CD8-positive, alpha-beta memory T cell (primary cell): ENCODE measurements at regions of chr3 and their contacts with region 1.

Region 1: GRCh38 chr3:120558771-120559241 is 37.3 kb upstream of the NDUFB4 start:
- DNase-seq: peak; percentile 83 to 92 (median 85)
- H3K4me3 ChIP-seq: peak overlapping the region; percentile 71
- H3K4me3 Mint-ChIP-seq: peak overlapping the region; percentile 64 to 87 (median 80)
- H3K27ac ChIP-seq: peak overlapping the region; percentile 63
- H3K27ac Mint-ChIP-seq: peak overlapping the region; percentile 57 to 93 (median 88)
- H3K4me1 ChIP-seq: peaks cover 8% of the 10 kb centered on the region
- H3K4me1 Mint-ChIP-seq: peaks cover 9 to 19% (median 18%) of the 10 kb centered on the region in 3 donors
- H3K27me3 ChIP-seq: peaks cover 10% of the 10 kb centered on the region
- H3K27me3 Mint-ChIP-seq: peaks cover 9 to 14% of the 10 kb centered on the region in 2 donors

Region 2: DNA sequence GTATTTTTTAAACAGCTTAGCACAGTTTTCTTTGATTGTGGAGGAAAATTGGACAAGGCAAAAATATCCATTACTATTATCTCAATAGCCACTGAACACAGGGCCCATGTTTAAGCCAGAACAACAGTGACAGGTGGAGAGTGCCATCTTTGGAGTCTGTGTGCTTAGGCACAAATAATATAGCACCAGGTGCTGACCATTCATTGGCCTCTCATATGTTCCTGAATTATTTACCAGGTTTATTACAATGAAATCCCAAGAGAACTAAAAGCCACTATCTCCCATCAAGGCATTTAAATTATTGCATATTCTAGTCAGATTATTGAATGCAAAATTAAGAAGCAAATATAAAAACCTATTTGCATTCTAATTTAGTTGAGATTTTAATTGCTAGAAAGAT is 313.4 kb before region 1 on chr3:
- CTCF ChIA-PET with region 1: interaction called, 25 read pairs
- POLR2A ChIA-PET with region 1: no interaction called
- DNase-seq: no peak
- H3K4me3 ChIP-seq: no peak overlapping the region
- H3K4me3 Mint-ChIP-seq: no peak overlapping the region
- H3K27ac ChIP-seq: no peak overlapping the region
- H3K27ac Mint-ChIP-seq: no peak overlapping the region
- H3K4me1 ChIP-seq: no peaks in the 10 kb centered on the region
- H3K4me1 Mint-ChIP-seq: no peaks in the 10 kb centered on the region
- H3K27me3 ChIP-seq: no peaks in the 10 kb centered on the region
- H3K27me3 Mint-ChIP-seq: peaks cover 23 to 39% of the 10 kb centered on the region in 2 donors

Region 3: DNA sequence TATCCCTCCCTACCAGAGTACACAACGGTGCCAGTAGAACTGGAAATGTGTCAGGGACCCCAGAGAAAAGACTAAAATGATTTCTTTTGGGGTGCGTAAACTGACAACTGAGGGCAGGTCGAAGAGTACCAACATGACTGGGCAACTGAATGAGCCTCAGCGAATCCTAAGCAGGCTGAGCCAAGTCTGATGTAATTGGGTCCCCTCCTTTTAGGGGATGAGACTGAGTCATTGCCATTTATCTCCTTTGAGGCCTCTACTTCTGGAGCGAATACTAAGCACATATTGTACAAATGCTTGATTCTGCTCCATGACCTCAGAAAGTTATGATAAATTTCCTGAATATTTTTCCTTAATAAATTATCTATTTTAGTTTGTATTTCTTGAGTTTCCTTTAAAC is 256.4 kb before region 1 on chr3:
- CTCF ChIA-PET with region 1: no interaction called
- POLR2A ChIA-PET with region 1: no interaction called
- DNase-seq: no peak
- H3K4me3 ChIP-seq: no peak overlapping the region
- H3K4me3 Mint-ChIP-seq: no peak overlapping the region
- H3K27ac ChIP-seq: no peak overlapping the region
- H3K27ac Mint-ChIP-seq: no peak overlapping the region
- H3K4me1 ChIP-seq: no peaks in the 10 kb centered on the region
- H3K4me1 Mint-ChIP-seq: no peaks in the 10 kb centered on the region
- H3K27me3 ChIP-seq: no peaks in the 10 kb centered on the region
- H3K27me3 Mint-ChIP-seq: peaks cover 0 to 5% of the 10 kb centered on the region in 2 donors

Region 4: GRCh38 chr3:120417272-120417911 is 141.4 kb before region 1 on chr3:
- CTCF ChIA-PET with region 1: interaction called, 23 read pairs
- POLR2A ChIA-PET with region 1: no interaction called
- DNase-seq: peak; percentile 63 to 86 (median 73)
- H3K4me3 ChIP-seq: peak overlapping the region; percentile 30
- H3K4me3 Mint-ChIP-seq: peak overlapping the region; percentile 81 to 93 (median 84)
- H3K27ac ChIP-seq: no peak overlapping the region
- H3K27ac Mint-ChIP-seq: peak overlapping the region in 6 of 8 donors; percentile 9 to 91 (median 38)
- H3K4me1 ChIP-seq: peaks cover 5% of the 10 kb centered on the region
- H3K4me1 Mint-ChIP-seq: peaks cover 10 to 21% (median 14%) of the 10 kb centered on the region in 3 donors
- H3K27me3 ChIP-seq: no peaks in the 10 kb centered on the region
- H3K27me3 Mint-ChIP-seq: peaks cover 8 to 10% of the 10 kb centered on the region in 2 donors

Region 5: DNA sequence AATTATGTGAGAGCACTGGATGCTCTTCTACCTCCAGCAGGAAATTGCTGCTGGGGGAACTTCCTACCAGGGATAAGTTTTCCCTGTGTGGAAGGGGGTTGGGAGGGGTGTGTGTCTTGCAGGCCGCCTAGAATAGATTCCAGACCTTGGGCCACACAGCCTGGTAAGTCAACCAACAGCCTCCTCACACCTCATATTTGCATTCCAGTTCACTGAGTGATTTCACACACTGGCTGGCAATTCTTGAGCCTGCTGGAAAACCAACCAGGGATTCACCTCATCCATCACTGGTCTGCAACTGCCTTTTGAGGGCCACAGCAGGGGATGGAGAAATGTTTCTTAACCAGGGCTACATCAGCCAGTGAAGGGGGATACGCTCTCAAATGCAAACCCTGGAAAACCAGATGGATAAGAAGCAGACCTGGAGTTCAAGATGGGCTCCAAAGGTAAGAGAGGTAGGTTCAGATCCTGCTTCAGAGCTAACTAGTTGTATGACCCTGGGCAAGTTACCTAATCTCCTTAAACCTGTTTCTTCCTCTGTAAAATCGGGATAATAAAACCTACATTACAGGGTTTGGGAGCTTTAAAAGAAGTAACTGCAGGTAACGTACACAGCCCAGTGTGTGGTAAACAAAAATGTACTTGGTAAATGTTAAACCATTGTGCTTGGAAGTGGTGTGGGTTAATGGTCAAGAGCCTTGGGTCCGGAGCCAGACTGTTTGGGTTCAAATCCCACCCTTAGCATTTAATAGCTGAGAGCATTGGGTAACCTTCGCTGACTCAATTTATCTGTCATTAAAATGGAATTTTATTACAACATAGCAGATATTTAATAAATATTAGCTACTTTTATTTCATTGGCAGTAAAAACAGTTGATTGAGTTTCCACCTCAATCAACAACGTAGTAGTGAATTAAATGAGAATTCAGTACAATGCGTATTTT is 109.8 kb before region 1 on chr3:
- CTCF ChIA-PET with region 1: no interaction called
- POLR2A ChIA-PET with region 1: no interaction called
- DNase-seq: no peak
- H3K4me3 ChIP-seq: no peak overlapping the region
- H3K4me3 Mint-ChIP-seq: peak overlapping the region in 2 of 7 donors; percentile 68 to 79
- H3K27ac ChIP-seq: no peak overlapping the region
- H3K27ac Mint-ChIP-seq: no peak overlapping the region
- H3K4me1 ChIP-seq: no peaks in the 10 kb centered on the region
- H3K4me1 Mint-ChIP-seq: peaks cover 10 to 18% (median 15%) of the 10 kb centered on the region in 3 donors
- H3K27me3 ChIP-seq: peaks cover 7% of the 10 kb centered on the region
- H3K27me3 Mint-ChIP-seq: peaks cover 21 to 70% of the 10 kb centered on the region in 2 donors

Region 6: DNA sequence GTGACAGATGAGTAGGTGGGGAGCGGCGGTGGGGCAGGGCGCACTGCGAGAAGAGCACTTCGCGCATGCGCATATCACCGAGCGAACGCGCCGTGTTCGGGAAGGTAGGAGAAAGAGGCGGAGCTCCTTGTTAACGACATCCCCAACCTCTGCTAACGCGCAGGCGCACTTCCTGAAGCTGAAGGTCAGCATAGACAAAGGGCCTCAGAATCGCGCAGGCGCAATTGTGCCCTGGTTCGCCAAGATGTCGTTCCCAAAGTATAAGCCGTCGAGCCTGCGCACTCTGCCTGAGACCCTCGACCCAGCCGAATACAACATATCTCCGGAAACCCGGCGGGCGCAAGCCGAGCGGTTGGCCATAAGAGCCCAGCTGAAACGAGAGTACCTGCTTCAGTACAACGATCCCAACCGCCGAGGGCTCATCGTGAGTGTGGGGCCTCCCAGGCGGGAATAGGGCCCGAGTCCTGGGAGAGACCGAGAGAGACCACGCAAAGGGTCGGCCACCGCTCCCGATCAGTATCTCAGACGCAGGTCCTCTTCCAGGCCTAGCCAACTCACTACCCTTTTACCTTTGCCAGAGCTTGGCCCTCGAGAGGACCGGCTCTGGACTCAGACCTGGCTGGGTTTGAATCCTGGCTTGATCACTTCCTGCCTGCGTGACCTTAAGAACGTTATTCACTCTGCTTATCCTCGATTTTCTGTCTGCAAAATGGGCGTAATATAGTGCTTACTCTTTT is 37.5 kb after region 1 on chr3 and contains the start of gene NDUFB4:
- CTCF ChIA-PET with region 1: interaction called, 22 read pairs
- POLR2A ChIA-PET with region 1: interaction called, 6 read pairs
- DNase-seq: peak; percentile 92 to 98 (median 95)
- H3K4me3 ChIP-seq: peak within 1 kb of the TSS; percentile 99
- H3K4me3 Mint-ChIP-seq: peak within 1 kb of the TSS in 6 of 7 donors; percentile 86 to 99 (median 90)
- H3K27ac ChIP-seq: peak within 1 kb of the TSS; percentile 96
- H3K27ac Mint-ChIP-seq: peak within 1 kb of the TSS in 7 of 8 donors; percentile 96 to 100 (median 98)
- H3K4me1 ChIP-seq: peaks cover 35% of the 10 kb centered on the region
- H3K4me1 Mint-ChIP-seq: peaks cover 7 to 13% (median 10%) of the 10 kb centered on the region in 3 donors
- H3K27me3 ChIP-seq: no peaks in the 10 kb centered on the region
- H3K27me3 Mint-ChIP-seq: peaks cover 0 to 2% of the 10 kb centered on the region in 2 donors
- total RNA-seq, gene NDUFB4: 102 to 103 TPM

Region 7: GRCh38 chr3:120742198-120742849 is 183.5 kb after region 1 on chr3 and contains the starts of genes GTF2E1 and RABL3:
- CTCF ChIA-PET with region 1: interaction called, 11 read pairs
- POLR2A ChIA-PET with region 1: no interaction called
- DNase-seq: peak; percentile 92 to 97 (median 96)
- H3K4me3 ChIP-seq: peak within 1 kb of the TSS; percentile 99
- H3K4me3 Mint-ChIP-seq: peak within 1 kb of the TSS; percentile 87 to 96 (median 94)
- H3K27ac ChIP-seq: peak within 1 kb of the TSS; percentile 99
- H3K27ac Mint-ChIP-seq: peak within 1 kb of the TSS; percentile 93 to 99 (median 98)
- H3K4me1 ChIP-seq: peaks cover 13% of the 10 kb centered on the region
- H3K4me1 Mint-ChIP-seq: peaks cover 31 to 56% (median 50%) of the 10 kb centered on the region in 3 donors
- H3K27me3 ChIP-seq: no peaks in the 10 kb centered on the region
- H3K27me3 Mint-ChIP-seq: no peaks in the 10 kb centered on the region
- total RNA-seq, gene GTF2E1: 25.9 to 27.8 TPM
- total RNA-seq, gene RABL3: 39.0 to 40.4 TPM

Region 8: DNA sequence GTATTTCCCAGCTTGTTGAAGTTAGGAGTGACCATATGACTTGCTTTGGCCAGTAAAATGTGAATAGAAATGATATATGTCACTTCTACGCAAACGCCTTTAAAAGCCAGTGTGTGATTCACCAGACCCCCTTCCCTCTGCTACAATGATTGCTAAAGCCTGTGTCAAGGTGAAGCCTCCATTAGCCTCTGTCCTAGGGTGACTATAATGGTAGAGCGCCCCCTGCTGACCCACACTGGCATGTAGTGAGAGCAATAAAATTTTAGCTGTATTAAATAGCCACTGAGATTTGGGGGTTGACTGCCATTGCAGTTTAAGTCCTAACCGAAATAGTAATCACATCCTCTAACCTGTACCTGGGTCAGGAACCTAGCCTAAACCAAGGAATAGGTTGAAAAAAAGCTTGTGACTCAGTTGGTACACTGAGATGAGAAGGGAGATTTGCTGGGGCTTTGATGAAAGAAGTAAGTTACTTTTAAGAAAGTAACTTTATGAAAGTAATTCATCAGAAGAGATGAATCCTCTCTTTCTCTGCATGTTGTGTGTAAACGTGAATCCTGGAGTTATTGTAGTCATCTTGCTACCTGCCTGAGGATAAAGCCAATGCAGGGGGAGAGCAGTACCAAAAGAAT is 236.3 kb after region 1 on chr3:
- CTCF ChIA-PET with region 1: interaction called, 186 read pairs
- POLR2A ChIA-PET with region 1: no interaction called
- DNase-seq: peak; percentile 60 to 85 (median 72)
- H3K4me3 ChIP-seq: no peak overlapping the region
- H3K4me3 Mint-ChIP-seq: no peak overlapping the region
- H3K27ac ChIP-seq: no peak overlapping the region
- H3K27ac Mint-ChIP-seq: no peak overlapping the region
- H3K4me1 ChIP-seq: no peaks in the 10 kb centered on the region
- H3K4me1 Mint-ChIP-seq: no peaks in the 10 kb centered on the region
- H3K27me3 ChIP-seq: no peaks in the 10 kb centered on the region
- H3K27me3 Mint-ChIP-seq: no peaks in the 10 kb centered on the region